Posterior cingulate gyrus (tissue), 11 donors: ENCODE measurements at regions of chr12 and their contacts with region 1.

Region 1: DNA sequence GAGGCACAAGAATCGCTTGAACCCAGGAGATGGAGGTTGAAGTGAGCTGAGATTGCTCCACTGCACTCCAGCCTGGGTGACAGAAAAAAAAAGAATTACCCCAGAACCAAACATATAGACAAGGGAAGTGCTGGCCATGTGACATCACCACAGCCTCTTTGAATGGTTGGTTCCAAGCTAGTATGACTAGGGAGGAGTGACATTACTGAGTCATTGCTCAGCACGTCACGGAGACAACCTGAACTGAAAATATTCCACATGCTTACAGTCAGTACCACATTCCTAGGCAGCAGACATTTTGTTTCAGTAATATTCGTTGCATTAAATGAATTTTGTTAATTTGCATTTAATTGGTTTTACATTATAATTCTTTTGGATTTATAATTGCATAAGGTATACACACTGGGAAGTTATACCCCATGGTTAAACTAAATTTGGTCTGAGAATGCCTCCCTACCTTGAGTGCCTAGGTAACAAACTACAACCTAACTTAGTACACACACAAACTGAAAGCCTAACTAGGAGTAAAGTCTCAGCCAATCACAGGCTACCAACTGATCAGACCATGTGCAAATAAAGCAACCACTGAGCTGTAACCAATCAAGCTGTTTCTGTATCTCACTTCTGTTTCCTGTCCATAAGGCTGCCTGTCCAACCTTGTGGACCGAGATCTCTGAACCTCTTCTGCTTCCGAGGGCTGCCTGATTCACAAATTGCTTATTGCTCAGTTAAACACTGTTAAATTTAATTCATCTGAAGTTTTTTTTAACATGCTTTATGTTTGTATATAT is 164.4 kb downstream of the CAND1 start:
- DNase-seq: no peak

Region 2: DNA sequence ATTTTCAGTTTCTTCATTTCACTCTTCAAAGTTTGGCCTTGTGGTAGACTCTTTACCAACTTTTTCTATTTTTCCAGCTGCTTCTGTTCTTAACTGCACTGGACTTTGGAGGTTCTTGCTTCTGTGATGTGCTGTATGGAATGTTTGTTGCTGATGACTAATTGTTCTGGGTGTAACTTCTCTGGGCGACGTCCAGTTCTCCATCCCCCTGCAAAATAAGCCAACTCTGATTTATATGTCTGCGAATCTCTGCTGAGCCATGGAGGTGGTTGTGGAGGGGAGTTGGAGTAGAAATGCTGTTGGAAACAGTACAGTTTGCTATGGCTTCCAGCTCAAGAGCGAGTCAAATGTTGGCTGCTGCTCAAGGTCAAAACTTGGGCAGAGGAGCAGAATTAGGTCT is 101.1 kb after region 1 on chr12:
- intact Hi-C with region 1: no loop called
- DNase-seq: no peak

Region 3: GRCh38 chr12:67648521-67649260 is 215.1 kb after region 1 on chr12 and contains the start of gene DYRK2:
- intact Hi-C with region 1: loop called (anchors 10 kb)
- DNase-seq: peak; percentile 51 to 96 (median 67)

Region 4: DNA sequence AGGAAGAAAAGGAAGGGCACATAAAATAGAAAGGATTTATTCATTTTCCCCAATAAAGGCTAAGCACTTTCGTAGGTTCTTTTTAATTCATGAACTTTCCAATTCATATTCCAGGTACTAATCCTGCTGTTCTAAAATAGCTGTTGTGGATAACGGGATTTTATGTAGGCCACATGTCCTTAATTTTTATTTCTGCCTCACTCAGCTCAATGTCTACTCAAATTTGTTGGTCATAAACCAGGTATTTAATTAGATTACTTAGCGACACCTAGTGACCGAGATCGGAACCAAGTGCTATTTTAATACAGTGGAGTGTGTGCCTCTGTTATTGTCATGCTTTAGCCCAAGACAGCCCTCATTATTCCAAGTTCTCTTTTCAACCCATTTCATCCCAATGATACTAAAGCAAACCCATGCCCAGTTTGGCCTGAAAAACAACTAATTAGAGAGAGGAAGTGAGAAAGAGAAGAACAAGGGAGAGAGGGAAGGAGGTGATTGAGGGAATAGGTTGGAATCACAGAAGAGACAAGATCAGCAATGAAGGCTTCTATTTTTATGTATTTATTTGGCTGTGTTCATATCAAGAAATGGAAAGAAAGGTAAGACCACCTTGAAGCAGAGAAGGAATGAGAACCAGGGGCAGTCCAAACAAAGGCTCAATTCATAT is 509.8 kb after region 1 on chr12:
- intact Hi-C with region 1: loop called (anchors 5 kb)
- DNase-seq: peak in 5 of 10 donors; percentile 14 to 57 (median 34)